IMR-90 (cell line): ENCODE measurements at regions of chr2 and their contacts with region 1.

Region 1: DNA sequence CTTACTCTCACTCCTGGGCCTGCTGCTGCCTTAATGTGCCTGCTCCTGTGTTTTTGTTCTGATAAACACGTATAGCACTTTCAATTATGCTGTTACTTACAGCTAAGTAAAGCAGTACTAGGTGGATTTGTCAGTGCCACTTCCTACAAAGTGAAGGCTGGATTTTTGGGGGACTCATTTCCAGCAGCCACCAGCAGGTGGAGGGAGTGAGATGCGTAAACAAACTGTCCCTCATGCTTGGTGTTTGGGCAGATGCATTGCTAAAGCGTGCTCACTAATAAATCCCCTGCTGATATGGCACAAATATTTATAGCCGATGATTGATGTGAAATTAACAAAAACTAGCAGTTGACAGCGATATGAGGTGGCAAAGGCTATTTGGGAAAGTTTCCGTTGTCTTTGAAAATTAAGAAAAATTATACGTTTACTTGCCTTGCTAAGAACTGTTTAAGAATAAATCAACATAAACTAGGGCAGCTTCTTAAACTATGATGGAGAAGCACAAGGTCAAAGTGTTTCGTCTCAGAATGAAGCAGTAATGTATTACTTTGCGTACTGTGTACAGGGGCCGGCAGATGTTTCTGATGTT is 101.7 kb downstream of the AGAP1 start:
- DNase-seq: peak; percentile 77
- ATAC-seq: peak; percentile 66
- H3K4me3 ChIP-seq: no peak overlapping the region
- H3K27ac ChIP-seq: no peak overlapping the region
- H3K4me1 ChIP-seq: peaks cover 6% of the 10 kb centered on the region
- H3K27me3 ChIP-seq: no peaks in the 10 kb centered on the region
- CTCF ChIP-seq: peak; percentile 91
- POLR2A ChIP-seq: peak; percentile 40; the same call in 1 of the 2 replicates
- RAD21 ChIP-seq: peak; percentile 91

Region 2: GRCh38 chr2:234544659-234545611 is 1050.6 kb before region 1 on chr2:
- CTCF ChIA-PET with region 1: no interaction called
- POLR2A ChIA-PET with region 1: no interaction called
- dilution Hi-C with region 1: no loop called
- in situ Hi-C with region 1: loop called (anchors 25 kb)
- intact Hi-C with region 1: no loop called
- DNase-seq: peak; percentile 59
- ATAC-seq: peak; percentile 95
- H3K4me3 ChIP-seq: no peak overlapping the region
- H3K27ac ChIP-seq: no peak overlapping the region
- H3K4me1 ChIP-seq: no peaks in the 10 kb centered on the region
- H3K27me3 ChIP-seq: no peaks in the 10 kb centered on the region; the same call in 1 of the 2 replicates
- CTCF ChIP-seq: peak; percentile 77
- POLR2A ChIP-seq: no peak
- RAD21 ChIP-seq: peak; percentile 88

Region 3: GRCh38 chr2:235238537-235238936 is 357.0 kb before region 1 on chr2:
- CTCF ChIA-PET with region 1: no interaction called
- POLR2A ChIA-PET with region 1: no interaction called
- dilution Hi-C with region 1: no loop called
- in situ Hi-C with region 1: no loop called
- intact Hi-C with region 1: no loop called
- DNase-seq: peak; percentile 46
- ATAC-seq: peak; percentile 70
- H3K4me3 ChIP-seq: no peak overlapping the region
- H3K27ac ChIP-seq: no peak overlapping the region
- H3K4me1 ChIP-seq: peaks cover 3% of the 10 kb centered on the region; the same call in 1 of the 2 replicates
- H3K27me3 ChIP-seq: peaks cover 18% of the 10 kb centered on the region
- CTCF ChIP-seq: no peak
- POLR2A ChIP-seq: no peak
- RAD21 ChIP-seq: no peak

Region 4: GRCh38 chr2:235263205-235264122 is 332.1 kb before region 1 on chr2:
- CTCF ChIA-PET with region 1: no interaction called
- POLR2A ChIA-PET with region 1: no interaction called
- dilution Hi-C with region 1: no loop called
- in situ Hi-C with region 1: no loop called
- intact Hi-C with region 1: loop called (anchors 10 kb)
- DNase-seq: peak; percentile 93
- ATAC-seq: peak; percentile 91
- H3K4me3 ChIP-seq: no peak overlapping the region
- H3K27ac ChIP-seq: peak overlapping the region; percentile 66
- H3K4me1 ChIP-seq: peaks cover 25% of the 10 kb centered on the region
- H3K27me3 ChIP-seq: no peaks in the 10 kb centered on the region
- CTCF ChIP-seq: no peak
- POLR2A ChIP-seq: no peak
- RAD21 ChIP-seq: 0 out of 2 replicates have a peak, but pooled peaks have one; percentile 16

Region 5: GRCh38 chr2:235493775-235494715 is 101.5 kb before region 1 on chr2 and contains the start of gene AGAP1:
- CTCF ChIA-PET with region 1: no interaction called
- POLR2A ChIA-PET with region 1: no interaction called
- dilution Hi-C with region 1: no loop called
- in situ Hi-C with region 1: no loop called
- intact Hi-C with region 1: loop called (anchors 1 kb)
- DNase-seq: peak; percentile 80
- ATAC-seq: peak; percentile 89
- H3K4me3 ChIP-seq: peak within 1 kb of the TSS; percentile 99
- H3K27ac ChIP-seq: peak within 1 kb of the TSS; percentile 72
- H3K4me1 ChIP-seq: peaks cover 11% of the 10 kb centered on the region
- H3K27me3 ChIP-seq: 0 out of 2 replicates have a peak, but pooled peaks cover 2% of the 10 kb centered on the region
- CTCF ChIP-seq: no peak
- POLR2A ChIP-seq: no peak
- RAD21 ChIP-seq: no peak
- total RNA-seq, gene AGAP1: 11.7 and 15.1 TPM in 2 replicates

Region 6: GRCh38 chr2:235669269-235669831 is 73.8 kb after region 1 on chr2:
- CTCF ChIA-PET with region 1: interaction called, 8 read pairs
- POLR2A ChIA-PET with region 1: no interaction called
- dilution Hi-C with region 1: no loop called
- in situ Hi-C with region 1: loop called (anchors 5 kb)
- intact Hi-C with region 1: loop called (anchors 1 kb)
- DNase-seq: peak; percentile 58
- ATAC-seq: peak; percentile 82
- H3K4me3 ChIP-seq: peak overlapping the region; percentile 80
- H3K27ac ChIP-seq: no peak overlapping the region
- H3K4me1 ChIP-seq: peaks cover 13% of the 10 kb centered on the region
- H3K27me3 ChIP-seq: no peaks in the 10 kb centered on the region; the same call in 1 of the 2 replicates
- CTCF ChIP-seq: no peak
- POLR2A ChIP-seq: no peak
- RAD21 ChIP-seq: no peak

Region 7: DNA sequence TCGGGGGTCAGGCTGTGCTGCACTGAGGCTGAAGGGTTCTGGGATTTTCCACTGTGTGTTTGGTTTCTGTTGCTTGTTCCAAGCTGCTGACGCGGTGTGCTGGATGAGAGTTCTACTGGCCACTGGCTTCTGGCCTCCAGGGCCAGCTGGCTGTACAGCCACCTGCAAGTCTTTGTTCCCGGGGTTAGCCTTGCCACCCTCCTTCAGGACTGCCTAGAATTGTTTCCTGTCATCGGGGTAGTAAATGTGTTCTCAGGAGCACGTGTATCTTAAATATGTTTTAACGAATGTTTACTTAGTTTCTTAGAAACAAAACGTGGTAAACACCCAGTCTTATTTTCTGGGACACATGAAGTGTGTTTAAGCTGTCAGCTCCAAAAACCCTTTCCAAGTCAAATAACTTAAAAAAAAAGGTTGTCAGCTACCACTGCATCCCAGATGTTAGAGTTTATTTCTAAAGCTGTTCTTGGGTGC is 129.5 kb after region 1 on chr2:
- CTCF ChIA-PET with region 1: no interaction called
- POLR2A ChIA-PET with region 1: no interaction called
- dilution Hi-C with region 1: no loop called
- in situ Hi-C with region 1: no loop called
- intact Hi-C with region 1: no loop called
- DNase-seq: no peak
- ATAC-seq: no peak
- H3K4me3 ChIP-seq: no peak overlapping the region
- H3K27ac ChIP-seq: no peak overlapping the region
- H3K4me1 ChIP-seq: peaks cover 2% of the 10 kb centered on the region; the same call in 1 of the 2 replicates
- H3K27me3 ChIP-seq: no peaks in the 10 kb centered on the region
- CTCF ChIP-seq: no peak
- POLR2A ChIP-seq: no peak
- RAD21 ChIP-seq: no peak

Region 8: GRCh38 chr2:235746257-235747084 is 151.0 kb after region 1 on chr2:
- CTCF ChIA-PET with region 1: interaction called, 13 read pairs
- POLR2A ChIA-PET with region 1: no interaction called
- dilution Hi-C with region 1: no loop called
- in situ Hi-C with region 1: loop called (anchors 5 kb)
- intact Hi-C with region 1: loop called (anchors 1 kb)
- DNase-seq: peak; percentile 90
- ATAC-seq: peak; percentile 88
- H3K4me3 ChIP-seq: no peak overlapping the region
- H3K27ac ChIP-seq: no peak overlapping the region
- H3K4me1 ChIP-seq: peaks cover 8% of the 10 kb centered on the region
- H3K27me3 ChIP-seq: no peaks in the 10 kb centered on the region
- CTCF ChIP-seq: peak; percentile 94
- POLR2A ChIP-seq: no peak
- RAD21 ChIP-seq: peak; percentile 97